Activated CD4-positive, alpha-beta memory T cell treated with anti-CD3 and anti-CD28 coated beads, Interleukin-2, amount 10 ng/mL, durations not matched to agents 7 days and 5 days (primary cell): ENCODE measurements at regions of chr22 and their contacts with region 1.

Region 1: DNA sequence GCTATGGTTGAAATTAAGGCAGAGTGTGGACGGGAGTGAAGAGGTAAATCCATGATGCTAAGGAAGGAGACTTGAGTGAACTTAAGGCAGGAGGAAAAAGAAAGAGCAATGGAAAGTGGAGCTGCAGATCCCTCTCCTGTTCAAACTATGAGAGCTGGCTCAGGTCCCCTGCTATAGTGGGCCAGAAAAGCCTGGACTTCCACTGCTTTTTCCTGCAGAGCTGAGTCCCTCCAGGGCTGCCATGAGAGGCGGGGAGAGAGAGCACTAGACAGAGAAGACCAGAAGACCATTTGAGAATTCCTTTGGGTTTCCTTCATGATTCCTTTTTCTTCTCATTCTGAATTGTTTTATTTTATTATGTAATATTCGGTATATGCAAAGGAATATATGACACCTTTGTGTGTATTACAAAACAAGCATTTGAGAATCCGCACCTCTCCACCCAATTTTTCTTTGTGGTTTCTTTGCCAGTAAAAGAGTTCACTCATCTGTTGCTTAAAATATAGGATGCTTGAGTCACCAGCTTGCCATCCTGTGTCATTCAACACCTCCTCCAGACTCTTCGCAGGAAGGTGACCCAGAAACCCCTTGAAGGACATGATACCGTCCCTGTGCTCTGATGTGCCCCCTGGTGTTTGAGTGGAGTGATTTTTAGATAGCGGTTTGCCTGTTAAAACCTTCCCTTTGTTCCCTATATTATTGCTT is 24.4 kb downstream of the SREBF2 start:
- DNase-seq: peak; percentile 77
- H3K4me3 Mint-ChIP-seq: no peak overlapping the region
- H3K27ac Mint-ChIP-seq: peak overlapping the region; percentile 86
- H3K4me1 Mint-ChIP-seq: peaks cover 72% of the 10 kb centered on the region
- H3K27me3 Mint-ChIP-seq: no peaks in the 10 kb centered on the region

Region 2: DNA sequence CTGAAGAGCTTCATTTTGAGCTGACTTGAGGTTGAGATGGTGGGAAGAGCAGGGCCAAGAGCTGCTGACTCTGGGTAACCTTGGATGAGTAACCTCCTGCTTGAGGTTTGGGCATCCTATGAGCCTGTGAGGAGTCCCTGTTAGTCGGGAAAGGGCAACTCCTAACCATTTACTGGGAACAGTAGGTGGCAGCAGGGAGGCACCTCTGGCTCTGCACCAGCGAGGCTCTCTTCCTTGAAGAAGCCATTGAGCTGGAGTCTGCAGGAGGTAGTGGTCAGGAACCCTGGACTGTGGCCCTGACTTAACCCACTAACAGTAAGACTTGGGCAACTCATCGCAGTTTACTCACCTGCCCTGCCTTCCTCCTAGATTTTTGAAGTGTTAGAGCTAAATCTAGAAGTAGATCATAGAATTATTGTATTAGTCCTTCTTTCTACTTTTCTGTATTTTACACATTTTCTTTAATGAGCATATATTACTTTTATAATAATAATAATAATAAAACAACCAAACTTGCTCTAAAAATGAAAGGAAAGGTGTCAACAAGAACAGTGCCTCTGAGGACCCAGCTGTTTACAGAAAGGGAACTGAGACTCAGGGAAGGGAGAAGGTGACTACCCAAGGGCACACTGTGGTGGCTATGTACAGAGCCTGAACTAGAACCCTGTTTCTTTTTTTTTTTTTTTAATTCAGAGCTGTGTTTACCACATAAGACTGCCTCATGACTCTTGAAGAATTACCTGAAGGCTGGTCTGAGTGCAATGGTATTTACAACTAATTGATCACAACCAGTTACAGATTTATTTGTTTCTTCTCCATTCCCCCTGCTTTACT is 110.5 kb before region 1 on chr22:
- CTCF ChIA-PET with region 1: interaction called, 30 read pairs
- POLR2A ChIA-PET with region 1: interaction called, 5 read pairs
- DNase-seq: peak; percentile 58
- H3K4me3 Mint-ChIP-seq: no peak overlapping the region
- H3K27ac Mint-ChIP-seq: no peak overlapping the region
- H3K4me1 Mint-ChIP-seq: peaks cover 11% of the 10 kb centered on the region
- H3K27me3 Mint-ChIP-seq: peaks cover 18% of the 10 kb centered on the region

Region 3: DNA sequence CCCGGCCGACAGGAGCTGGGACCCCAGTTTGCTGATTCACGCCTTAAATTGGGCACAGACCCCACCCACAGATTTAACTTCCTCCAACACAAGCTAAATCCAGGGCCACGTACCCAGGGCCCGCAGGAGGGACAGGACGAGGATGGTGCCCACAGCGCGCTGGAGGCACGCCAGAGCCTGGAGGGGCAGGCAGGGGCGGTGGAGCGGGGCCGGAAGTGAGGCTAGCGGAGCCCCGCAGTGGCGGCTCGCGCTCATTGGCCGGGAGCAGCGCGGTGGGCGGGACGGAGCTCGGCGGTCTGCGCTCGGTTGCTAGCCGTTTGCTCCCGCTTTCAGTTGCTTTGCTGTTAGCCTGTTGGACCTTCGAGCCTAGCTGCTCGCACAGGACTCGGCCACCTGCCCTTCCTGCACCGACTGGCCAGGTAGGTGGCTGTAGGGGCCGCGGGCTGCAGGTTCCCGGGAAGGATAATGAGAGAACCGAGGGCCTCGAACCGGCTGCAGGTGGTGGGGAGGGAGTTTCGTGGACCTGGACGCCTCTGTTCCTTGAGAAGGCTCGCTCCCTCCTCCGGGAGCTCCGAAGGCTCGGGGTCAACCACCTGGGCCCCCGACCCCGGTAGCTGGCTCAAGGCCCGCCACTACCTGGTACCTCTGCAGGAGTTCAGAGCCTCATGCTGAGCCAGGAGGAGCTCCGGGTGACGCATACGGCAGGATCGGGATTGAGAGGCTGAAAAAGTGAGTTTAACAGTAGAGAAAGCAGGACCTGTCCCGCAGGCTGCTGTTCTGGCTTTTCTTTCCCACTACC is 56.8 kb before region 1 on chr22 and contains the start of gene CCDC134:
- CTCF ChIA-PET with region 1: interaction called, 9 read pairs
- POLR2A ChIA-PET with region 1: interaction called, 14 read pairs
- DNase-seq: peak; percentile 93
- H3K4me3 Mint-ChIP-seq: peak within 1 kb of the TSS; percentile 91
- H3K27ac Mint-ChIP-seq: peak within 1 kb of the TSS; percentile 90
- H3K4me1 Mint-ChIP-seq: peaks cover 44% of the 10 kb centered on the region
- H3K27me3 Mint-ChIP-seq: no peaks in the 10 kb centered on the region
- total RNA-seq, gene CCDC134: 17.9 to 20.3 TPM

Region 4: GRCh38 chr22:41841085-41841659 is 16.1 kb before region 1 on chr22:
- CTCF ChIA-PET with region 1: interaction called, 10 read pairs
- POLR2A ChIA-PET with region 1: interaction called, 48 read pairs
- DNase-seq: no peak
- H3K4me3 Mint-ChIP-seq: no peak overlapping the region
- H3K27ac Mint-ChIP-seq: no peak overlapping the region
- H3K4me1 Mint-ChIP-seq: peaks cover 79% of the 10 kb centered on the region
- H3K27me3 Mint-ChIP-seq: no peaks in the 10 kb centered on the region

Region 5: DNA sequence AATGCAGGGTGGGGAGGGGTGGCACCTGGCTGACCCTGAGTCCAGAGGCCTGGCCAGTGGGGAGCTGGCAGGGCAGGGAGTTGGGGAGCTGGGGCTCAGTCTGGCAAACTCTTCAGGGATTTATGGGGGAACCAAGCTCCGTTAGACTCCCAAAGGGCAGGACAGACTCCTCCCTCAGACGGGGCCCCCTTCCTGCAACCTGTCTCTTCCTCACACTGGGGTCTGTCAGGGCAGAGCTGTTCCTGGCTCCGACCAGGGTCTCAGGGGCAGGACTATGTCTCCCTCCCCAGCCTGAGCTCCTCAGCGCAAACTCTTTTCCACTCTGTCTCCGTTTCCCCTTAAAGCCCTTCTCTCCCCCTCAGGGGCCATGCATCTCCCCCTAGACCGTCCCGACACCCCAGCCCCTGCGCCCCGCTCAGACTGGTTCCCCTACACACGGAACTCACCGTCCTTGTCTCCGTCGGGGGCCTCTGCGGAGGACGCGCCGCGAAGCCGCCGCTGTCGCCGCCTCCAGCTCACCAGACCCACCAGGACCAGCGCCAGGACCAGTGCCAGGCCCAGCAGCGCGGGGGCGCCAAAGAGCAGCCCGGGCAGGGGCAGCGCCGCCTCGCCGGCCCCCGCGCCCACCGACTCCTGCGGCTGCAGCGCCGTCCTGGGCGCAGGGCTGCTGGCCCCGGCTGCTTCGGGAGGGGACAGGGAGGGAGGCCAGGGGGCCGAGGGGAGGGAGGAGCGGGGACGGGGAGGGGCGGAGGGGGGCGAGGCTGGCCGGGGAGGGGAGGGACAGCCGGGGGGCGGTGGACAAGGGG is 68.6 kb after region 1 on chr22:
- CTCF ChIA-PET with region 1: interaction called, 12 read pairs
- POLR2A ChIA-PET with region 1: interaction called, 3 read pairs
- DNase-seq: peak; percentile 77
- H3K4me3 Mint-ChIP-seq: peak overlapping the region; percentile 60
- H3K27ac Mint-ChIP-seq: no peak overlapping the region
- H3K4me1 Mint-ChIP-seq: peaks cover 7% of the 10 kb centered on the region
- H3K27me3 Mint-ChIP-seq: peaks cover 26% of the 10 kb centered on the region